K562 (cell line): ENCODE measurements at regions of chrX and their contacts with region 1.

Region 1: DNA sequence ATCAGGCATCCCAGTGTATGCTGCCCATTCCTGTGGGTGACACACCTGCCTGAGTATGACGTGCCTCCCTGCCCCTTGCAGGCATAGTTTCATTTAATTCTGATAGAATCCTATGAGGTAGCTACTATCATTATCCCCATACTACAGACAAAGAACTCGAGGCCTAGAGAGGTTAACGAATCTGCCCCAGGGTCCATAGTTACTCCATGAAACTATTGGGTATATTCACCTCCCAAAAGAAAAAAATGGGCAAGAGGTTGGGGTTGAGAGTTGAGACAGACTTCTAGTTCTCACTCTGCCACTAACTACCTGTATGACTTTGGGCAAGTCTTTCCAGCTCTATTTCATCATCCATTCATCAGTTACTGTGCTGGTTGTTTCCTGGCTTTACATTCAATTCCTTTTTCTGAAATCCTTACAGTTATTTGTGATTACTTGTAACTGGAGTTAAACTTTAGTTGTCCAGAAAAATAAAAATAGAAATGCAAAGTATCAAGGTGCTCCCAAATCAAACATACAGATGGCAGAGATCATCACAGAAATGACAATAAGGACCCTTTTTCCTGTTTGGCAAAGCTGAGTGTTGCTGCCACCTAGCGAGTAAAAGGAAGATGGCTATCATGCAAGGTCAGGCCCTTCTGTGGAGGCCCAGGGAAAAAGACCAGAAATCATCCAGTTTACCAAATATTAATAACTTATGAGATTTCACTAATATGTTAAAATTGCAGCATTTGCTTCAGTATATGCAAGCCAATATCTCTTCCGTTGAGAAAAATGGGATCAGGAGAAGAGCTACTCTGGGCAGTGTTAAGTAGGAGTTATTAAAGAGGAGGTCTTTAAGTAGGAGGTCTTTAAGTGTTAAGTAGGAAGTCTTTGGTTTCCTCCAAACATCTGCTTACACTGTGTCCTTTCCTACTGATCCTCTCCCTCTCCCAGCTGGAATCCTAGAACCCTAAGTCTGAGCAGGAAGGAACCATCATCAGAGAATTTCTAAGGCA is 17.1 kb upstream of the MAP7D3 start:
- DNase-seq: peak; percentile 27 to 52 (median 50)
- ATAC-seq: peak; percentile 87
- H3K4me3 ChIP-seq: no peak overlapping the region
- H3K27ac ChIP-seq: no peak overlapping the region
- H3K4me1 ChIP-seq: no peaks in the 10 kb centered on the region
- H3K27me3 ChIP-seq: no peaks in the 10 kb centered on the region
- CTCF ChIP-seq: peak; percentile 66 to 73 (median 71)
- EP300 ChIP-seq: no peak
- POLR2A ChIP-seq: no peak
- RAD21 ChIP-seq: peak; percentile 51 to 73

Region 2: GRCh38 chrX:136168929-136169735 is 99.2 kb before region 1 on chrX:
- CTCF ChIA-PET with region 1: interaction called, 3 read pairs
- POLR2A ChIA-PET with region 1: no interaction called
- in situ Hi-C with region 1: no loop called
- intact Hi-C with region 1: loop called (anchors 1 kb)
- DNase-seq: peak in 3 of 4 experiments; percentile 28 to 62 (median 57)
- ATAC-seq: no peak; the same call in 2 of the 3 replicates
- H3K4me3 ChIP-seq: no peak overlapping the region
- H3K27ac ChIP-seq: no peak overlapping the region
- H3K4me1 ChIP-seq: no peaks in the 10 kb centered on the region
- H3K27me3 ChIP-seq: peaks cover 22 to 36% of the 10 kb centered on the region in 2 experiments
- CTCF ChIP-seq: no peak
- EP300 ChIP-seq: no peak
- POLR2A ChIP-seq: no peak
- RAD21 ChIP-seq: no peak

Region 3: GRCh38 chrX:136185409-136186022 is 82.8 kb before region 1 on chrX:
- CTCF ChIA-PET with region 1: no interaction called
- POLR2A ChIA-PET with region 1: no interaction called
- in situ Hi-C with region 1: no loop called
- intact Hi-C with region 1: no loop called
- DNase-seq: no peak
- ATAC-seq: no peak
- H3K4me3 ChIP-seq: no peak overlapping the region
- H3K27ac ChIP-seq: no peak overlapping the region
- H3K4me1 ChIP-seq: no peaks in the 10 kb centered on the region
- H3K27me3 ChIP-seq: peaks cover 2 to 3% of the 10 kb centered on the region in 2 experiments; a peak in 3 of 5 replicates
- CTCF ChIP-seq: no peak
- EP300 ChIP-seq: no peak
- POLR2A ChIP-seq: no peak
- RAD21 ChIP-seq: no peak

Region 4: GRCh38 chrX:136214551-136214950 is 53.8 kb before region 1 on chrX:
- CTCF ChIA-PET with region 1: no interaction called
- POLR2A ChIA-PET with region 1: no interaction called
- in situ Hi-C with region 1: no loop called
- intact Hi-C with region 1: loop called (anchors 5 kb)
- DNase-seq: no peak
- ATAC-seq: no peak
- H3K4me3 ChIP-seq: no peak overlapping the region
- H3K27ac ChIP-seq: no peak overlapping the region
- H3K4me1 ChIP-seq: peaks cover 0 to under 1% of the 10 kb centered on the region in 2 experiments; a peak in 1 of 5 replicates
- H3K27me3 ChIP-seq: no peaks in the 10 kb centered on the region
- CTCF ChIP-seq: no peak
- EP300 ChIP-seq: no peak
- POLR2A ChIP-seq: no peak
- RAD21 ChIP-seq: no peak

Region 5: DNA sequence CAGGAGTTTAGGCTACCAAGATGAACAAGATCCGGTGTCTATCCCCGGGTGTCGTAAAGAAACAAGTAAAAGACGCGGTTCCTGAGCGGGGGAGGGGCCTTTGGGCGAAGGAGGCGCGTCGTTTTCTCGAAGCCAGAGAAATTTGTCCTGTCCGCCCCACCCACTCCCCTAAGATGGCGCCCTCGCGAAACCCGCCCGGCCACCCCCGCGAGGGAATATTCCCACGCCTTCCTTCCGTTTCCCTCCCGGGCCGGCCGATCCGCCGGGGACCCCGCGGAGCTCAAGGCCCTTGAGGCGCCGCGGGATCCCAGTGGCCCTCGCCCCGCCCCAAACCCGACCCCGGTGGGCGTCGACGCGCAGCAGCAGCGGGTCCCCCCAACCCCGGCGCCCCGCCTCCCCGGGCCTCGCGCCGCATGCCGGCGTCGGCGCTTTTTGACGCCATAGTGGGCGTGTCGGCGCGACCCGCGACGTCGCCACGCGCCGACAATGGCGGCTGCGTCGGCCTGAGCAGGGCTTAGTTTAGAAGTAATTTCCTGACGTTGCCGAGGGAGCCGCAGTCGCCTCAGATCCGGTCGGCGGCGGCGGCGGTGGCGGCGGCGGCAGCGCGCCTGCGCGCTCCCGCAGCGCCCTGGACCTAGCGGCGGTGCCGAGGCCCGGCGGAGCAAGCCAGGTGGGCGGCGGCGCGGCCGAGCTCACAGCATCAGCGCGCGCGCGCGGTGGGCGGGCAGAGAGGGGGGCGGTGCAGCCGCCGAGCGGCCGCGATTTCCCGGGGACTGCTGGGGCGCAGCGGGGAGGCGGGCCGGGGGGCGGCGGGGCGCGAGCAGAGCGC is 228.6 kb after region 1 on chrX and contains the start of gene HTATSF1:
- CTCF ChIA-PET with region 1: no interaction called
- POLR2A ChIA-PET with region 1: no interaction called
- in situ Hi-C with region 1: no loop called
- intact Hi-C with region 1: loop called (anchors 10 kb)
- DNase-seq: peak; percentile 81 to 91 (median 81)
- ATAC-seq: peak; percentile 90
- H3K4me3 ChIP-seq: peak within 1 kb of the TSS; percentile 83
- H3K27ac ChIP-seq: peak within 1 kb of the TSS; percentile 92
- H3K4me1 ChIP-seq: no peaks in the 10 kb centered on the region
- H3K27me3 ChIP-seq: peaks cover 3 to 5% of the 10 kb centered on the region in 2 experiments; a peak in 3 of 5 replicates
- CTCF ChIP-seq: no peak
- EP300 ChIP-seq: no peak
- POLR2A ChIP-seq: peak; percentile 80
- RAD21 ChIP-seq: no peak
- polyA plus RNA-seq, gene HTATSF1: 17.7 to 29.0 TPM